ENCODE measurements at regions of chr9 and their contacts with region 1.

Region 1: GRCh38 chr9:32968101-32969011 is 33.1 kb downstream of the APTX start:
- DNase-seq: peak; percentile 66
- H3K27ac ChIP-seq: no peak overlapping the region
- CTCF ChIP-seq: peak; percentile 96

Region 2: GRCh38 chr9:32334100-32334499 is 634.3 kb before region 1 on chr9:
- CTCF ChIA-PET with region 1: interaction called, 10 read pairs
- POLR2A ChIA-PET with region 1: no interaction called
- DNase-seq: no peak
- H3K27ac ChIP-seq: no peak overlapping the region
- CTCF ChIP-seq: no peak

Region 3: DNA sequence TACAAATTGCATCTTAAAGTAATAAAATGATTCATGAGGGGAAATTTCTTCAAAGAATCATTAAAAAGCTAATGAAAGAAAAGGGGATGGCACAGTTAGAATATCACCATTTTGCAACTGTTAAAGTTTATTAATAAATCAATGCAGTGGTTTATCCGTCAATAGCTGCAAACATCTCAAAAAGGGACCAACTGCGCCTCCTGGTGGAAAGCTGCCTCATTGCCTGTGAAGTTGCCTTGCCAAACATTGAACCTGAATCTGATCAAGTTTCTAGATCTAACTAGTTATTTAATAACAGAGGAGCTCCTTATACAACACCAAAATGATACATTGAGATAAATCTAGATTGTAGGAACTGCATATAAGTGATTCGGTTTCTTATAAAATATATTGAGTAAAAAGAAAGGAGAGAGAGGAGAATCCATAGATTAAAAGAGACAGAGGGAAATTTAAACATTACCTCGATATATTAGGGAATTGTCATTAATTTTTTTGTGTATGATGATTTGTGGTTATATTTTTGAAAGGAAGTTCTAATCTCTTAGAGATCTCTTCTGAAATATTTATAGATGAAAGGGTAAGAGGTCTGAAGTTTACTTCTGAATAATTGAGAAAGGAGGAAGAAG is 388.5 kb before region 1 on chr9:
- CTCF ChIA-PET with region 1: interaction called, 46 read pairs
- POLR2A ChIA-PET with region 1: no interaction called
- DNase-seq: peak; percentile 51
- H3K27ac ChIP-seq: no peak overlapping the region
- CTCF ChIP-seq: peak; percentile 99

Region 4: DNA sequence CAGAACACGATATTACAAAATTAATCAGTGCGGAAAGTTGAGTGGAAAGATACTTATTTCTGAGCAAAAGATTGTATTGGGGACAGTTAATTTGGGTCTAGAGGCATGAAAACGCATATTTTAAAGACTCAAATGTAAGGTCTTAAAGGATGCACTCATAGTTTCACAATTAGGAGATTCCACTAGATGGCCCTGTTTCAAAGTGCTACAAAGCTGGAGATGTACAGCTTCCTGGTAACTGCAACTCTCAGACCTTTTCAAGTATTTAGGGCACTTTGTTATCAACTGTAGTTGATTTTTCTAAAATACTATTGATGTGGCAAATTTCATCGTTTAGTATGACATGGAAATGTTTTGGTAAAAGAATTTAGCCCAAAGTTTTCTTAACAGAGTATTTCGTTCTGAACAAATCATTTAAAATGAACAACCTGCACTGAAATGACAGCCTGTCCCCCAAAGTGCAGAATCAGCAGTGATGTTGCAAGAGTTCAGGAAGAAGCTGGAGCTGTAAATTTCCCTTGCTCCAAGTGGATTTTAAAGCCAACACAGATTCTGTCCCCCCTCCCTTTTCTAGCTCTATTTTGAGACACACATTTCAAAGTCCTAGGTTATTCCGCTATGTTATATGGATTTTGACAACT is 379.2 kb before region 1 on chr9:
- CTCF ChIA-PET with region 1: interaction called, 14 read pairs
- POLR2A ChIA-PET with region 1: no interaction called
- DNase-seq: peak; percentile 59
- H3K27ac ChIP-seq: no peak overlapping the region
- CTCF ChIP-seq: peak; percentile 83

Region 5: GRCh38 chr9:32886021-32886420 is 82.3 kb before region 1 on chr9:
- CTCF ChIA-PET with region 1: no interaction called
- POLR2A ChIA-PET with region 1: no interaction called
- DNase-seq: no peak
- H3K27ac ChIP-seq: no peak overlapping the region
- CTCF ChIP-seq: no peak

Region 6: GRCh38 chr9:32918628-32919027 is 49.7 kb before region 1 on chr9:
- CTCF ChIA-PET with region 1: no interaction called
- POLR2A ChIA-PET with region 1: no interaction called
- DNase-seq: no peak
- H3K27ac ChIP-seq: no peak overlapping the region
- CTCF ChIP-seq: no peak

Measured in RWPE1 (cell line).